Mammary epithelial cell (primary cell): ENCODE measurements at regions of chr4 and their contacts with region 1.

Region 1: GRCh38 chr4:185597532-185598188 is 62.4 kb upstream of the PDLIM3 start:
- DNase-seq: peak; percentile 46
- H3K4me3 ChIP-seq: no peak overlapping the region
- H3K27ac ChIP-seq: no peak overlapping the region
- H3K4me1 ChIP-seq: no peaks in the 10 kb centered on the region
- H3K27me3 ChIP-seq: no peaks in the 10 kb centered on the region
- CTCF ChIP-seq: peak; percentile 99

Region 2: DNA sequence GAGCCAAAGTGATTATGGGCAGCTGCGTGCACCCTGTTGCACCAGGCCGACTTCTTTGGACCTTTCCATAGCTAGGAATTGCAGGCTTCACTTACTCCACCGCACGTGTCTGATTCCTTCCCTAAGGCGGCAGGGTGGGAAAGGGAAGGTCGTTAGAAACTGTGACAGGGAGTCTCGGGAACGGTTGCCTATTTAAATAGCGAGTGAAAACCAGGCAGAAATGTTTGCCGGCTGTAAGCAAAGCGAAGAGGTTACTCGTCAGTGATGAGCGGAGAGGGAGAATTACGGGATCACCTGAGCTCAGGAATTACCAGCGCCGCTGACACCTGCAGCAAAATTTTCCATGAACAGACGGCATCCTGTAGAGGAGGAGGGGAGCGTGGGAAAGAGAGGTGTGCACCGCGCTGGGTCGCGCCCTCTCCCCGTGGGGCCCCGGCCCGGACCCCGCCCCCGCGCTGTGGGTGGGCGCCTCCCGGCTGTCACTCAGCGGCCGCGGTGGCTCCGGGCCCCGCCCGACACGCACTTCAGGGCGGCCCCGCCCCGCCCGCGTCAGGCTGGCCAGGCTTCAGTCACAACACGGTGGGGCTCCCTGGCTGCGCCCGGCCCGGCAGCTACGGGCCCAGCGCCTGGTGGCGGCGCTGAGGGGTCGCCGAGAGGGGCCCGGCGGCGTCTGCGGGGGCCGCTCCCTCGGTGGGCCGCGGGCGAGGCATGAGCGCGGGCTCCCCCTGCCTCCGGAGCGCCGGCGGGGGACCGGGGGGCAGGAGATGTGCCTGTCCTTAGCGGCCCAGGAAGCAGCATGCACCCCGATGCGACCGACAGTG is 388.4 kb before region 1 on chr4 and contains the start of gene SNX25:
- CTCF ChIA-PET with region 1: no interaction called
- dilution Hi-C with region 1: no loop called
- in situ Hi-C with region 1: no loop called
- intact Hi-C with region 1: loop called (anchors 2 kb)
- DNase-seq: peak; percentile 79
- H3K4me3 ChIP-seq: peak within 1 kb of the TSS; percentile 35 to 78 (median 73)
- H3K27ac ChIP-seq: peak within 1 kb of the TSS; percentile 66
- H3K4me1 ChIP-seq: peaks cover 11% of the 10 kb centered on the region
- H3K27me3 ChIP-seq: no peaks in the 10 kb centered on the region
- CTCF ChIP-seq: no peak
- total RNA-seq, gene SNX25: 15.3 to 24.0 TPM

Region 3: GRCh38 chr4:185471235-185472102 is 126.2 kb before region 1 on chr4 and contains the start of gene CCDC110:
- CTCF ChIA-PET with region 1: no interaction called
- dilution Hi-C with region 1: no loop called
- in situ Hi-C with region 1: loop called in 1 of 2 experiments (anchors 25 kb)
- intact Hi-C with region 1: loop called (anchors 1 kb)
- DNase-seq: peak; percentile 81
- H3K4me3 ChIP-seq: peak within 1 kb of the TSS; percentile 71 to 86 (median 82)
- H3K27ac ChIP-seq: no peak within 1 kb of the TSS
- H3K4me1 ChIP-seq: peaks cover 10% of the 10 kb centered on the region
- H3K27me3 ChIP-seq: peaks cover 5% of the 10 kb centered on the region
- CTCF ChIP-seq: peak in 1 of 2 donors; percentile 46
- total RNA-seq, gene CCDC110: 0.17 to 0.59 TPM

Region 4: GRCh38 chr4:185479507-185479971 is 118.1 kb before region 1 on chr4:
- CTCF ChIA-PET with region 1: no interaction called
- dilution Hi-C with region 1: no loop called
- in situ Hi-C with region 1: loop called in 1 of 2 experiments (anchors 25 kb)
- intact Hi-C with region 1: no loop called
- DNase-seq: no peak
- H3K4me3 ChIP-seq: no peak overlapping the region
- H3K27ac ChIP-seq: no peak overlapping the region
- H3K4me1 ChIP-seq: no peaks in the 10 kb centered on the region
- H3K27me3 ChIP-seq: peaks cover 3% of the 10 kb centered on the region
- CTCF ChIP-seq: no peak